ENCODE measurements at regions of chr2 and their contacts with region 1.

Region 1: DNA sequence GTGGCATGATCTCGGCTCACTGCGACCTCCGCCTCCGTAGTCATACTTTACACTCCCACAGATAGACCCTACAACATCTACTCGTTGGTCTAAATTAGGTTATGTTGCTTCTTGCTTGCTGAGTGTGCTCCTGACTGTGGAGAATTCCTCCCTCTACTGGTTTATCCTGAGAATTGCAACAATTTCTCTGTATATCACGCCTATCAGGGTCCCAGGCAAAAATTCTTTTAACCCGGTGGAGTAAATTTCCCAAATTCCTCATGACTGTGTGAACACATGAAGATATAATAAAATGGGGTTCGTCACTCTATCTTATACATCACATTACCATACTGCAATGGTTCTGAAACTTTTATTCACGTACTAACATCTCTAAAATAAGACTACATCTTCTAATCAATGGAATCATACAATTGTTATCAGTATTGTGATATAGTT is 156.7 kb downstream of the EVA1A start:
- DNase-seq: peak; percentile 58
- H3K4me3 Mint-ChIP-seq: no peak overlapping the region
- H3K27ac Mint-ChIP-seq: no peak overlapping the region
- H3K4me1 Mint-ChIP-seq: no peaks in the 10 kb centered on the region
- H3K27me3 Mint-ChIP-seq: peaks cover 100% of the 10 kb centered on the region
- CTCF ChIP-seq: peak; percentile 86

Region 2: DNA sequence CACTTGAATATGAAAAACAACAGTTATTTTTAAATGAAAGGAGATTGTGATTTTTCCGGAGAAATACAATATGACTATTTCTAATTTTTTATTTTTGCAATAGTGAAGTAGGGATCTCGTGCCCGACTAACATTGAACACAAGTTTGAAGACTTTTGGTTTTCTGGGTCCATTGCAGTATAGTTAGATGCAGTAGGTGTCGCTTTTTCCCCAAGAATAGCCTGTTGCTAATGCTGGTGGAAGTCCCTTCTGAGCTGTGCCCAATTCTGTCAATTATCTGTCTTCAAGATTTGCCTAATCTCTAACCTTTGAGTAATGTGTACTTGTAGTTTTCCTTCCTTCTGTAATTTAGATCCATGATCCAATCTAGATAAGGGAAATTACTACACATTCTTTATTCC is 713.4 kb before region 1 on chr2:
- CTCF ChIA-PET with region 1: interaction called, 6 read pairs
- POLR2A ChIA-PET with region 1: no interaction called
- intact Hi-C with region 1: loop called (anchors 1 kb)
- DNase-seq: peak; percentile 75
- H3K4me3 Mint-ChIP-seq: no peak overlapping the region
- H3K27ac Mint-ChIP-seq: no peak overlapping the region
- H3K4me1 Mint-ChIP-seq: peaks cover 6% of the 10 kb centered on the region
- H3K27me3 Mint-ChIP-seq: no peaks in the 10 kb centered on the region
- CTCF ChIP-seq: peak; percentile 89

Region 3: DNA sequence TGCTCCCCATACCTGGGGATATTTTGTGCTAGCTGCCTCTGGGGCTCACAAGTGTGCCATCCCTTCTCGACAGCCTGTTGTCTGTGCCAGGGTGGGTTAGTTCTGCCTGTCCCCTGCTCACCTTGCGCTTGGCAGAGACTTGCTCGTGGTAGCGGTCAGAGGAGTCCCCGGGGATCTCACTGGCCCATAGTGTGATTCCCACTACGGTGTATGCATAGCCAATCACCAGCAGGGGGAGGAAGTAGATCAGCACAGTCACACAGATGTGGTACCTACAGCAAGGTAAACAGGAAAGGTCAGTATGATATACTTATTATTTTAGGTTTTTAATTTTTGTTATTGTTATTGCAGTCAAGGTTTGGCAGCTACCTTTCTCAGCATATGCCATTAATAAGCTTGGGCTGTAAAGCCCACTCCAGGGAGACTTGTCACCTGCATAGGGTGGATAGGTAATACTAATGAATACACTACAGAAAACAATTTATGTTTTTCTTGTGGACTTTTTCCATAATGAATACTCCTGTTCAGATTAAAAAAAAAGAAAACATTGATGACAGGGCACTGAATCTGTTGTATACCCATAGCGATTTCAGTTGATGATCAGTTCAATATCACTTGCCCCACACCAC is 350.4 kb before region 1 on chr2:
- CTCF ChIA-PET with region 1: interaction called, 17 read pairs
- POLR2A ChIA-PET with region 1: interaction called, 3 read pairs
- intact Hi-C with region 1: loop called (anchors 5 kb)
- DNase-seq: peak; percentile 62
- H3K4me3 Mint-ChIP-seq: no peak overlapping the region
- H3K27ac Mint-ChIP-seq: no peak overlapping the region
- H3K4me1 Mint-ChIP-seq: no peaks in the 10 kb centered on the region
- H3K27me3 Mint-ChIP-seq: no peaks in the 10 kb centered on the region
- CTCF ChIP-seq: peak; percentile 78

Region 4: DNA sequence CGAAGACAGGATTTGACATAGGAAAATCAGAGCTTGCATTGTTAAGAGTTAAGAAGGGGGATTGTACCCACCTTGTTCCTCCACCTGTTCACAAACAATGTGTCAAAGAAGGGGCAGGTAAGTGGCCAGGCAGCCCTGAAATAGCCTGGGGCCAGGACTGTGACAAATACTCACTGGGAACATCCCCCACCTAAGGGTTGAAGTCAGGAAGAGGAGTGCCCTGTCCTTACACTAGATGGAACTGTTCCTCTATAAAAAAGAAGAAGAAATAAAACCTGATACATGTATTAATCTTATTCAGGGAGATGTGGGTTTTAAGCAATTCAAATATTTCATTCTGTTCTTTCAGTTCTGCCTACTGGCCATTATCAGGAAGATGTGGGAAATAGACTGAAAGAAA is 246.6 kb before region 1 on chr2:
- CTCF ChIA-PET with region 1: no interaction called
- POLR2A ChIA-PET with region 1: no interaction called
- intact Hi-C with region 1: loop called (anchors 1 kb)
- DNase-seq: peak; percentile 9
- H3K4me3 Mint-ChIP-seq: no peak overlapping the region
- H3K27ac Mint-ChIP-seq: no peak overlapping the region
- H3K4me1 Mint-ChIP-seq: no peaks in the 10 kb centered on the region
- H3K27me3 Mint-ChIP-seq: no peaks in the 10 kb centered on the region
- CTCF ChIP-seq: no peak

Region 5: GRCh38 chr2:75290600-75291150 is 113.3 kb before region 1 on chr2:
- CTCF ChIA-PET with region 1: no interaction called
- POLR2A ChIA-PET with region 1: no interaction called
- intact Hi-C with region 1: loop called (anchors 10 kb)
- DNase-seq: peak; percentile 8
- H3K4me3 Mint-ChIP-seq: no peak overlapping the region
- H3K27ac Mint-ChIP-seq: no peak overlapping the region
- H3K4me1 Mint-ChIP-seq: peaks cover 7% of the 10 kb centered on the region
- H3K27me3 Mint-ChIP-seq: no peaks in the 10 kb centered on the region
- CTCF ChIP-seq: peak; percentile 21

Measured in MCF 10A (cell line).